ENCODE measurements at regions of chr2 and their contacts with region 1.

Region 1: DNA sequence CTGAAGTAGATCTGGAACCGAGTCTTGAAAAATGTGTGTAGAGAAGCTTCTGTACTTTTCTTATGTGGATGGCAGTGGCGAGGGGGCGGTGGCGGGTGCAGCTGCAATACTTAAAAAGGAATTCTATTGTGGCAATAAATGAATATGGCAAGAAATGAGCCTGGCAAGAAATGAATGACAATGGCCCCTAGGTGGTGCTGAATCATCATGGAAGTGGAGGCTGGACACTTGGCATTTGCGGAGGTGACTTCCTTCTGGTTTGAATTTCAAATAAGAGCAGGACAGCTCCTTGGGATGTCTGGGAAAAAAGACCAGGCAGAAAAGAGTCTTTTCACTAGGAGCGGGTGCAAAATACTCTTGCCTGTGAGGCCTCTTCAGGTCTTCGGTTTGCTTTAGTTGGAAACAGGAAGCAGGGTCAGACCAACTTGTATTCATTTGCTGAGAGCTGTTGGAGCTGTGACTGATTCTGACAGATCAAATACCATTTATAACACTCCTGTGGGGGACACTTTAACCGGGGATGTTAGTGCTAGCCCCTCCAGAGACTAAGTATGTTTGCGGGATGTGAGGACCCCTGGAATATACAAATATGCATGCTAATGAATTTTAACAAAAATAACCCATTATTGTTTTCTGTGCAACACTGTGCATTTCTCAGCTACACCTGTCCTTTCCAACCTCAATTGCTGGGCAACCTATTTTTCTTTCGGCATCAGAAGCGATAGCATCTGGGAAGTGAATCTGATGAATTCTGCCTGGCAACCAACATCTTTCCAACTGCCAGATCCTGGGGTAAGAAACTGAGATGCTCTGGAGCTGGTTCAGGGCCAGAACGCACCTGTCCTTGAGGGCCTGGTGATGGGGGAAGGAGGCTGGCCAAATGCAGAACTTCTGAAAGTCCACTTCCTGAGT is 35.4 kb downstream of the FASTKD2 start:
- DNase-seq: peak; percentile 57
- H3K4me3 ChIP-seq: no peak overlapping the region
- H3K27ac ChIP-seq: no peak overlapping the region
- H3K4me1 ChIP-seq: peaks cover 0 to 9% (median 5%) of the 10 kb centered on the region in 4 donors
- H3K27me3 ChIP-seq: no peaks in the 10 kb centered on the region
- CTCF ChIP-seq: peak; percentile 56 to 74 (median 67)
- EP300 ChIP-seq: no peak
- POLR2A ChIP-seq: no peak

Region 2: DNA sequence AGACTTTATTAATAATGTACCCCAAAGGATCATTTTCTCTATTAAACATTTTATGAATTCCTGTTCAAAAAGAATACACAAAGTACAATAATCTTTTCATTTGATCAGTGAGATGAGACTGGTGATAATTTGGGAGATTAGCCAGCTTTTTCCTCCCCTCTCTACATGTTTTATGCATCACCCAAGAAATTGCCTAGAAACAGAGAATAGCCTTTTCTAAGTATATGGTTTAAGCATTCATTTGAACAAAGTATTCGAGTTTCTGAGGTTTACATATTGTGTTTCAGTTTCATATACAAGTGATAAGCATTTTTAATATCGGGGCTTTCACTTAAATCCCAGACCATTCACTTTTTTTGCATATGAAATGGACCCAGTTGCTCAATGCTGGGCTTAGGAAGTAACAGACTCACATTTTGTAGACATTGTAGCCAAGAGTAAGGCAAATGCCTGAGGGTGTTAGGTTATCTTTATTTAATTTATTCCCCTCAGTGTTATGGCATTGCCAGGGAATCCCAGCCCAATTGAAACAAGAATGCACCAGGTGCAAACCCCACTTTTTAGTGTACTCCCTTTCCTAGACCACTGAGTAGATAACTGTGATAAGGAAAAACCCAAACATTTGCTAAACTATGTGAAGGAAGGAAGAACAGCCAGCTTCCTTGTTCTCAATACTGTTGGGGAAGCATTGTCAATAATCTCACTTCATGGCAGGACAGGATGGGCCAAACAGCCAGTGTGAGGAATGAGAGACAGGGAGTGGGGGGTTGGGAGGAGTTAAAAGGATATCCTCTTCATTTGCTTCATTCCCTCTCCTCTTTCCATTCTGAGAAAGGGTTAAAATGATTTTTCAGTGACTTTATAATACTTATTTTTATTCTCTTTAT is 142.1 kb after region 1 on chr2:
- in situ Hi-C with region 1: no loop called
- intact Hi-C with region 1: no loop called
- DNase-seq: no peak
- H3K4me3 ChIP-seq: no peak overlapping the region
- H3K27ac ChIP-seq: no peak overlapping the region
- H3K4me1 ChIP-seq: no peaks in the 10 kb centered on the region
- H3K27me3 ChIP-seq: no peaks in the 10 kb centered on the region
- CTCF ChIP-seq: no peak
- EP300 ChIP-seq: no peak
- POLR2A ChIP-seq: no peak

Region 3: GRCh38 chr2:206971805-206972204 is 171.0 kb after region 1 on chr2:
- in situ Hi-C with region 1: no loop called
- intact Hi-C with region 1: loop called (anchors 10 kb)
- DNase-seq: peak; percentile 13
- H3K4me3 ChIP-seq: no peak overlapping the region
- H3K27ac ChIP-seq: no peak overlapping the region
- H3K4me1 ChIP-seq: no peaks in the 10 kb centered on the region
- H3K27me3 ChIP-seq: no peaks in the 10 kb centered on the region
- CTCF ChIP-seq: no peak
- EP300 ChIP-seq: no peak
- POLR2A ChIP-seq: no peak